HCT116 (cell line): ENCODE measurements at regions of chr3 and their contacts with region 1.

Region 1: DNA sequence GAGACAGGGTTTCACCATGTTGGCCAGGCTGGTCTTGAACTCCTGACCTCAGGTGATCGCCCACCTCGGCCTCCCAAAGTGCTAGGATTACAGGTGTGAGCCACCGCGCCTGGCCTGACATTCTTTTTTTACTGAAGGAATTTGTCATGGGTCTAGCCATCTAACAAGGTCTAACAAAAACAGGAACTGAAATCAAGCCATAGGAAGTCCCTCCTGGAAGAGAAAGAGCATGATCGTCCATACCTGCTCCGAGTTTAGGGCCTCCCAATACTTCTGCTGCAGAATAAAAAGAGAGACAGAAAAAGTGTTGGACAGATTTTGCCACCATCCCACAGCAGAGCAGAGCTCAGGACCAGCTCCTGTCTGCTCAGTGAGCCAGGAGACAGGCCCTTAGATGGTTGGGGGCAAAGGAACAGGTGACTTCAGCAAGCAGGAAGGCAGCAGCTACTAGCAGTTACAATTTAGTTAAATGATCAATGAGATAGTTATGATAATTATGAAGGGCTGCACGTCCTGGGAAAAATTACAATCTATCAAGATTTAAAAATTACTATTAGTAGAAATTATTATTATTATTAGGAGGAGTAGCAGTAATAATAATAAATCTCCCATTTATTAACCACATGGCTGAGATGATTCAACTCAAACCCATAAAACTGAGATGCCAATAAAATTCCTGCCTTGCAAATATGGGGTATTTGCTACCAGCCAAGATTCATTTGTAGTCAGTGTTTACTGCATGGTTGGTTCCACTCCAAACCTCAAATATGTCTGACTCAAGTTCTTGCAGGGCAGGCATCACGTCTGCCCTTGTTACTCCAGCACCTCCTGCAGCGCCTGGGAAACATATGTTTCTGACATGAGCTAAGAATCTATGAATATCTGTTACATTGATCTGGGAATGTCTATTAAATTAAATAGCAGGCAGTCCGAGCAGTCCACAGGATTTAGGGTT is 40.1 kb downstream of the TMEM44 start:
- DNase-seq: peak; percentile 91
- ATAC-seq: peak; percentile 89
- H3K4me3 ChIP-seq: no peak overlapping the region
- H3K27ac ChIP-seq: no peak overlapping the region
- H3K4me1 ChIP-seq: peaks cover 15 to 25% of the 10 kb centered on the region in 2 experiments
- H3K27me3 ChIP-seq: no peaks in the 10 kb centered on the region
- CTCF ChIP-seq: peak in 1 of 3 experiments; percentile 15; a peak in 1 of 6 replicates
- POLR2A ChIP-seq: no peak
- RAD21 ChIP-seq: peak; percentile 50

Region 2: DNA sequence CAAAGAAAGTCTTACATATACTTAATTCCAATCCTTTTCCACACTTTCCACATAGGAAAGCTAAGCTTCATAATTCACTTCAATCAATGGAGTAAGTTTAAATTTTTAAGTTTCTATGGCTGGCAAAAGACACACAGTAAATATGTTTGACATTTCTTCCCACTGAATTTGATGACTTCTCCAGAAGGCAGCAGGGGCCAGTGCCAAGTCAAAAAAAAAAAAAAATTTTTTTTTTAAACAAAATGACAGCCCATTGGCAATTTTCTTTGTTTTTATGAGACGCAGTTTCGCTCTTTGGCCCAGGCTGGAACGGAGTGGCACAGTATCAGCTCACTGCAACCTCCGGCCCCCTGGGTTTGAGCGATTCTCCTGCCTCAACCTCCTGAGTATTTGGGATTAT is 134.9 kb before region 1 on chr3:
- CTCF ChIA-PET with region 1: no interaction called
- POLR2A ChIA-PET with region 1: no interaction called
- RAD21 ChIA-PET with region 1: no interaction called
- intact Hi-C with region 1: loop called (anchors 5 kb)
- DNase-seq: no peak
- ATAC-seq: 0 out of 2 replicates have a peak, but pooled peaks have one; percentile 30
- H3K4me3 ChIP-seq: no peak overlapping the region
- H3K27ac ChIP-seq: no peak overlapping the region
- H3K4me1 ChIP-seq: no peaks in the 10 kb centered on the region
- H3K27me3 ChIP-seq: no peaks in the 10 kb centered on the region
- CTCF ChIP-seq: peak in 1 of 3 experiments; percentile 14; a peak in 2 of 6 replicates
- POLR2A ChIP-seq: no peak
- RAD21 ChIP-seq: no peak

Region 3: GRCh38 chr3:194472290-194472920 is 120.7 kb before region 1 on chr3:
- CTCF ChIA-PET with region 1: interaction called, 21 read pairs
- POLR2A ChIA-PET with region 1: no interaction called
- RAD21 ChIA-PET with region 1: no interaction called
- intact Hi-C with region 1: loop called (anchors 1 kb)
- DNase-seq: peak; percentile 53
- ATAC-seq: peak; percentile 86
- H3K4me3 ChIP-seq: no peak overlapping the region
- H3K27ac ChIP-seq: no peak overlapping the region
- H3K4me1 ChIP-seq: no peaks in the 10 kb centered on the region
- H3K27me3 ChIP-seq: no peaks in the 10 kb centered on the region
- CTCF ChIP-seq: peak; percentile 87 to 93 (median 91)
- POLR2A ChIP-seq: no peak
- RAD21 ChIP-seq: peak; percentile 96

Region 4: GRCh38 chr3:194573691-194574437 is 19.2 kb before region 1 on chr3:
- CTCF ChIA-PET with region 1: interaction called, 12 read pairs
- POLR2A ChIA-PET with region 1: no interaction called
- RAD21 ChIA-PET with region 1: no interaction called
- intact Hi-C with region 1: no loop called
- DNase-seq: no peak
- ATAC-seq: peak; percentile 69
- H3K4me3 ChIP-seq: no peak overlapping the region
- H3K27ac ChIP-seq: no peak overlapping the region
- H3K4me1 ChIP-seq: peaks cover 14 to 42% of the 10 kb centered on the region in 2 experiments
- H3K27me3 ChIP-seq: no peaks in the 10 kb centered on the region
- CTCF ChIP-seq: peak; percentile 48 to 68 (median 66)
- POLR2A ChIP-seq: no peak
- RAD21 ChIP-seq: peak; percentile 87

Region 5: GRCh38 chr3:194604834-194605233 is 11.8 kb after region 1 on chr3:
- CTCF ChIA-PET with region 1: interaction called, 13 read pairs
- POLR2A ChIA-PET with region 1: no interaction called
- RAD21 ChIA-PET with region 1: no interaction called
- intact Hi-C with region 1: no loop called
- DNase-seq: no peak
- ATAC-seq: peak; percentile 61
- H3K4me3 ChIP-seq: no peak overlapping the region
- H3K27ac ChIP-seq: no peak overlapping the region
- H3K4me1 ChIP-seq: no peaks in the 10 kb centered on the region
- H3K27me3 ChIP-seq: no peaks in the 10 kb centered on the region
- CTCF ChIP-seq: peak; percentile 5 to 57 (median 53); a peak in 4 of 6 replicates
- POLR2A ChIP-seq: no peak
- RAD21 ChIP-seq: peak; percentile 28; the same call in 1 of the 2 replicates

Region 6: GRCh38 chr3:194632809-194633348 is 39.8 kb after region 1 on chr3:
- CTCF ChIA-PET with region 1: interaction called, 10 read pairs
- POLR2A ChIA-PET with region 1: no interaction called
- RAD21 ChIA-PET with region 1: no interaction called
- intact Hi-C with region 1: no loop called
- DNase-seq: no peak
- ATAC-seq: peak; percentile 70
- H3K4me3 ChIP-seq: peak overlapping the region; percentile 69 to 74
- H3K27ac ChIP-seq: peak overlapping the region; percentile 93
- H3K4me1 ChIP-seq: peaks cover 4 to 14% of the 10 kb centered on the region in 2 experiments; a peak in 2 of 4 replicates
- H3K27me3 ChIP-seq: no peaks in the 10 kb centered on the region
- CTCF ChIP-seq: no peak
- POLR2A ChIP-seq: no peak
- RAD21 ChIP-seq: no peak

Region 7: GRCh38 chr3:194906229-194906629 is 313.2 kb after region 1 on chr3:
- CTCF ChIA-PET with region 1: no interaction called
- POLR2A ChIA-PET with region 1: no interaction called
- RAD21 ChIA-PET with region 1: no interaction called
- intact Hi-C with region 1: no loop called
- DNase-seq: no peak
- ATAC-seq: no peak
- H3K4me3 ChIP-seq: no peak overlapping the region
- H3K27ac ChIP-seq: no peak overlapping the region
- H3K4me1 ChIP-seq: no peaks in the 10 kb centered on the region
- H3K27me3 ChIP-seq: no peaks in the 10 kb centered on the region
- CTCF ChIP-seq: no peak
- POLR2A ChIP-seq: no peak
- RAD21 ChIP-seq: no peak